Activated CD4-positive, alpha-beta T cell treated with anti-CD3 and anti-CD28 coated beads, Interleukin-2, amount 10 ng/mL, durations not matched to agents 24 days and 14 days (primary cell): ENCODE measurements at regions of chr2 and their contacts with region 1.

Region 1: GRCh38 chr2:191521608-191522208 is 156.2 kb upstream of the NABP1 start:
- DNase-seq: no peak
- H3K4me3 Mint-ChIP-seq: no peak overlapping the region
- H3K27ac Mint-ChIP-seq: no peak overlapping the region
- H3K4me1 Mint-ChIP-seq: no peaks in the 10 kb centered on the region
- H3K27me3 Mint-ChIP-seq: peaks cover 16% of the 10 kb centered on the region

Region 2: GRCh38 chr2:191051825-191052778 is 469.6 kb before region 1 on chr2:
- intact Hi-C with region 1: loop called (anchors 2 kb)
- DNase-seq: peak; percentile 80
- H3K4me3 Mint-ChIP-seq: no peak overlapping the region
- H3K27ac Mint-ChIP-seq: no peak overlapping the region
- H3K4me1 Mint-ChIP-seq: peaks cover 22% of the 10 kb centered on the region
- H3K27me3 Mint-ChIP-seq: no peaks in the 10 kb centered on the region

Region 3: DNA sequence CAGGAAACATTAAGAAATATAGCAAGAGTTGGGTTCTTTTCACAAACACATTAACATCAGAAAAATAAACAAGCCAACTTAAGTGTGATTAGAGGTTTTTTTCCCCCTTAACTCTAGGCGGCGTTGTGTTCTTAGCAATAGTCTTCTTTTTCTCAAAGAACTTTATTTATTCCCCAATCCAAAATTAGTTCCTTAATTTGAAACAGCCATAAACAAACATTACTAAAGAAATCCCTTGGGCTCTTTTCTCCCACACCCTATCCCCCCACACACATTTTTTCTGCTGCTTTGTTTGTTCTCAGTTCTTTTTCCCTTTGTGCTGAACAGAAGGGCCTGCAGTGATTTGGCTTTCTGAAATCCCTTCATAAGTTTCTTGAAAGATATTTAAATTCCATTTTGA is 289.7 kb before region 1 on chr2:
- intact Hi-C with region 1: loop called (anchors 5 kb)
- DNase-seq: no peak
- H3K4me3 Mint-ChIP-seq: no peak overlapping the region
- H3K27ac Mint-ChIP-seq: no peak overlapping the region
- H3K4me1 Mint-ChIP-seq: peaks cover 3% of the 10 kb centered on the region
- H3K27me3 Mint-ChIP-seq: no peaks in the 10 kb centered on the region

Region 4: DNA sequence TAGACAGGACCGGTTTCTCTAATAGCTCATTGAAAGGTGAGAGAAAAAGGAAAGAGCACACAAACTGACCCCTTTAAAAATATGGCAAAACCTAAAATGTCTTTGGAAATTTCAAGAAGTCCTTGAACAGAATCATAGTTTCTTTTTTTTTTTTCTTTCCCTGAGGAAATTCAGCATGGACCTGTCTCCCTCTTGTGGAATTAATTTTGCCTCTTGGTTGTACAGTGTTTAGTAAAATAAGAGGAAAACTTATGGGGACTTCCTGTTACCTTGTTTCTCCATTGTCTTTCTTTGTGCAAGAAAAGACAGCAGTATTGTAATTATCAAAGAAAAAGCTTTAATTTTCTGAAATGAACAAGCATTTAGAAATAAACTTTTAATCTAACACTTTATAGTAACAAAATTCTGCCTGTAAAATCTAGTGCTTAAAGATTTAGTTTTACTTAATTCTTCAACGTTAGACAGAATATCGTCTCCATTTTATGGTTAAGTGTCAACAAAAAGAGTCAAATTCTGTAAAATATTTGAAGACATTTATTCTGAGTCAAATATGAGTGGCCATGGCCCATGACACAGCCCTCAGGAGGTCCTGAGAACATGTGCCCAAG is 20.0 kb before region 1 on chr2:
- intact Hi-C with region 1: no loop called
- DNase-seq: no peak
- H3K4me3 Mint-ChIP-seq: no peak overlapping the region
- H3K27ac Mint-ChIP-seq: no peak overlapping the region
- H3K4me1 Mint-ChIP-seq: no peaks in the 10 kb centered on the region
- H3K27me3 Mint-ChIP-seq: peaks cover 12% of the 10 kb centered on the region